ENCODE measurements at regions of chr17 and their contacts with region 1.

Region 1: DNA sequence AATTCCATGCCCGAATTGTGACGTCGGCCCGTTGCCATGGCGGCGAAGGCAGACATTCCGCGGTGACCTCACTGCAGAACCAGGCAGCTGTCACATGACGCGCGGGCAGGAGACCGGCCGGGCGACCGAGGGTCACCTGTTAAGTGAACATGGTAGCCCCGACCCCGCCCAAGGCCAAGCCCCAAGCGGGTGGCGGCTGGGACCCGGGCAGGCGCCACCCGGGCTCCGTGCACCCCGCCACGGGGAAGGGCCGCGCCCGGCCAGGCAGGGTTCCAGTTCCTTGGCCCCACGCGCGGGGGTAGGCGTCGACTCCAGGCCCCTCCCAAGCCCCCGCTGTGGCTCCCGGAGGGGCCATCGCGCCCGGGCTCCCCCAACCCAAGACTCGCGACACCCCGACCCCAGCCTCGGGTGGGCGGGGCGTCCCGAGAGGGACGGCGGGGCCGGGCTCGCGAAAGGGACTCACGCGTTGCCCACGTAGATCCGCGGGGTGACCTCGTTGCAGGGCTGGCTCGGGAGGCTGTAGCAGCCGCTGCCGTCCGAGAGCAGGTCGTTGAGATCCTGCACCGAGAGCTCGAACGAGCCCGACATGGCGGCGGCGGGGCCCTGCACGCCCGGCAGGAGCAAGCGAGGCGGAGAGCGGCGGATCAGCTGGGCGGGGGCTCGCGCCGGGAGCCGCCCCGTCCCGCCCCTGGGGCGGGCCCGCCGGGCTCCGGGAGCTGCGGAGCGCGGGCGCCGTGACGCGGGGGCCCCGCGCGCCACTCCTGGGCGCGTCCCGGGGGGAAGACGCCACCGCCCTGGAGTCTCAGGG is at the start of gene DUSP3:
- DNase-seq: peak; percentile 97
- ATAC-seq: peak; percentile 94
- total RNA-seq, gene DUSP3: 260 TPM

Region 2: DNA sequence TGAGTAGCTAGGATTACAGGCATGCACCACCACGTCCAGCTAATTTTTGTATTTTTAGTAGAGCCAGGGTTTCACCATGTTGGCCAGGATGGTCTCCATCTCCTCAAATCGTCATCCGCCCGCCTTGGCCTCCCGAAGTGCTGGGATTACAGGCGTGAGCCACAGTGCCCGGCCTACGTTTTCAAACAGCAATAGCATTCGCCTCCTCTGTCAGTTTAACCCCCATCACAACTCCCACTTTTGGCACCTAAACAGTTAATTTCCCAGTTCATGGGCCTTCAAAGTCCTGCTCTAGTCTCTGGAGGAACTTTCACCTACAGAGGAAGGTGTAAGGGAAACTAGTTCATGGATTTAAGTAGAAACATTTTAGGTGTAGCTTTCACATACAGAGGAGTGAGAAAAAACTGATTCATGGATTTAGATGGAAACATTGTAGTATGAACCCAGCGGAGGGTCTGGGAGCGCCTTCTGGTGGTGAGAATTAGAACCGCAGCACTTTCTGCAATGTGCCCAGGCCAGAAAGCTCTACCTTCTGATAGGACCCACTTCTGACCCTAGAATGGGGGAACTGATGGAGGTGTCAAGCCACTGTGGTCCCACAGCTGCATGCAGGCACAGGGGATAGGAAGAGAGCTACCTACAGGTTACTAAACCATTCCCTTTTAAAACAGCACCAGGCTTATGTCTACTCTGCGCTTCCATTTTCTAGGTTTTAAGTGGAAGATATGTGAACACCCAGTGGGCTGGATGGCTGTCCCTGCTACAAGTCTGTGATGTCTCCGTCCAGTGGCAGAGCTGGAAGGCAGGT is 104.8 kb before region 1 on chr17:
- intact Hi-C with region 1: no loop called
- DNase-seq: peak; percentile 85
- ATAC-seq: peak; percentile 61

Region 3: DNA sequence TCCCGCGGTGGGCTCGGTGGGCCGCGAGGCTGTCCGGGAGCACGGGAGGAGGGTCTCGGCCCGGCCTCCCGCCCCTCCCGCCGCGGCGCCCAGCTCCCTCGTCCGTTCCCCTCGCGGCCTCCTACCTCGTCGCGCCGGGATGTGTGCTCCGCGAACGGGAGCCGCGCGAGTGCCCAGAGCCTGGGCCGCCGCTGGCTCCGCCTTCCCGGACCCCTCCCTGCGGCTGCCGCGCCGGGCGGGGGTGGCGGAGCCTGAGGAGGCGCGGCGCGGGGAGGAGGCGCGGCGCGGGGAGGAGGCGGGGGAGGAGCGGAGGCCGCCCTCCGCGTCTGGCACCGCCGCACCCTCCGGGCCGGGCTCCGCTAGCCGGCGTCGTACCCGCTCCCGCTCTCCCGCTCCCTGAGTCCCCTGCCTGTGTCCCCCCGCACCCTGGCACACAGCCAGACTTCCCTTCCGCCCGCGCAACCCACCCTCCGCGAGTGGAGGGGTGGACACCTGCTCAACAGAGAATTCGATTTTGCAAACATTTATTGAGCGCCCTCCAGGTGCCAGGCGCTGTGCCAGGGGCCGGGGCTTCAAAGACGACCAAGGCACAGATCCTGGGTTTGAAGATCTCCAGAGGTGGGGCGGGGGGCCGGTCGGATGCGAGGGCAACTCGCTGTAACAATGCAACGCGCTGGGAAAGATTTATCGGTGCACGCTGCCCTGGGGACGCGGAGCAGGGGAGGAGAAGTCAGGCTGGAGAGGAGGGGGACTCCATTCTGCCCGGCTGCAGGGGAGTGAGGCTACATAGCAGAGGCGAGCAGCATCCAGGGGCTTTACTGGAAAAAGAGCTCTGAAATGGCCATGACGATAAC is 54.7 kb after region 1 on chr17 and contains the start of gene MPP3:
- intact Hi-C with region 1: loop called (anchors 5 kb)
- DNase-seq: peak; percentile 87
- ATAC-seq: peak; percentile 86
- total RNA-seq, gene MPP3: 43.0 TPM

Region 4: GRCh38 chr17:43846221-43846712 is 67.7 kb after region 1 on chr17:
- intact Hi-C with region 1: loop called (anchors 5 kb)
- DNase-seq: peak; percentile 90
- ATAC-seq: peak; percentile 97